Right cardiac atrium (tissue), 5 donors: ENCODE measurements at regions of chrX and their contacts with region 1.

Region 1: GRCh38 chrX:154515878-154516655 is at the start of gene FAM3A:
- DNase-seq: peak; percentile 94 to 98 (median 96)
- ATAC-seq: peak; percentile 97
- H3K4me3 ChIP-seq: peak within 1 kb of the TSS; percentile 84
- H3K27ac ChIP-seq: peak within 1 kb of the TSS; percentile 93
- H3K4me1 ChIP-seq: peaks cover 3% of the 10 kb centered on the region
- H3K27me3 ChIP-seq: no peaks in the 10 kb centered on the region
- total RNA-seq, gene FAM3A: 55.4 to 60.8 (median 58.9) TPM

Region 2: GRCh38 chrX:154409222-154409871 is 106.7 kb before region 1 on chrX and contains the start of gene DNASE1L1:
- intact Hi-C with region 1: loop called in 1 of 4 experiments (anchors 10 kb)
- DNase-seq: peak; percentile 86 to 93 (median 93)
- ATAC-seq: peak; percentile 80 to 82
- H3K4me3 ChIP-seq: peak within 1 kb of the TSS; percentile 37
- H3K27ac ChIP-seq: peak within 1 kb of the TSS; percentile 83
- H3K4me1 ChIP-seq: no peaks in the 10 kb centered on the region
- H3K27me3 ChIP-seq: no peaks in the 10 kb centered on the region
- total RNA-seq, gene DNASE1L1: 47.3 to 52.6 (median 51.2) TPM